Naive thymus-derived CD4-positive, alpha-beta T cell (primary cell): ENCODE measurements at regions of chr5 and their contacts with region 1.

Region 1: DNA sequence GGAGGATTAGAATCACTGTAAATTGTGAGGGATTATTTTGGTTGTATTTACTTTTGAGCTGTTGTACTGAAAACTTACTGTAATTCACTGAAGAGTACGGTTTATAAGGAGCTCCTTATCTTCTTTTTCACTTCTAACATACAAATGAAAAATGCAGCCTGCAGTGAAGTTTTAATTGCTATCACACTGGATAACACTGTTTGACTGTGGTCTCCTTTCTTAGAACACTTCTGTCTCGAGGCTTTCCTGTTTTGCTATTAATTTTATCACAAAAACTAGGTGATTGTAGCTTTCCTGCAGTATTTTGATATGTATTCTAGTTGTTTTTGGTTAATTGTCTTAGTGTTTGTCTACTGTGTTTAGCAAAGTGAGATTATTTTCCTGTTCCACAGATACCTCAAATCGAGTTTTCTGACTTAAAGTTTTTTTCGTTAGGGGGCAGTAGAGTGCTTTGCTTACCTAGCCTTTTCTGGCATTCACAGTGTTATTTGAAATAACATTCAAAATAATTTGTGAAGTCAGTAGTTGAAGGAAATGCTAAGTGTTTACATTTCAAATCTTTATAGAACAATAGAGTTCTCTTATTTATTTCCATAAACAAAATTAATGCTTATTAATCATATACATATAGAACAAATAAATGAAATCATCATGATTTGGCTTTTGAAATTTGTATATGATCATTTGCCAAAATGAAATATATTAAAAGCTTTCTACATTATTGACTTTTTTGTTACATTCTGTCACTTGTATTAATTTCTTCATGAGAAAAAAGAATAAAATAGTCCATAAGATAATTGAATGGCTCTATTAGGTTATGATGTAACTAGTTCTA is 52.9 kb downstream of the COMMD10 start:
- DNase-seq: peak in 7 of 9 donors; percentile 14 to 47 (median 38)
- ATAC-seq: peak; percentile 64
- H3K4me3 ChIP-seq: no peak overlapping the region
- H3K4me3 Mint-ChIP-seq: no peak overlapping the region
- H3K27ac ChIP-seq: no peak overlapping the region
- H3K27ac Mint-ChIP-seq: peak overlapping the region in 7 of 9 donors; percentile 28 to 78 (median 58)
- H3K4me1 ChIP-seq: no peaks in the 10 kb centered on the region
- H3K4me1 Mint-ChIP-seq: peaks cover 8 to 50% (median 30%) of the 10 kb centered on the region in 7 donors
- H3K27me3 ChIP-seq: no peaks in the 10 kb centered on the region
- H3K27me3 Mint-ChIP-seq: no peaks in the 10 kb centered on the region

Region 2: DNA sequence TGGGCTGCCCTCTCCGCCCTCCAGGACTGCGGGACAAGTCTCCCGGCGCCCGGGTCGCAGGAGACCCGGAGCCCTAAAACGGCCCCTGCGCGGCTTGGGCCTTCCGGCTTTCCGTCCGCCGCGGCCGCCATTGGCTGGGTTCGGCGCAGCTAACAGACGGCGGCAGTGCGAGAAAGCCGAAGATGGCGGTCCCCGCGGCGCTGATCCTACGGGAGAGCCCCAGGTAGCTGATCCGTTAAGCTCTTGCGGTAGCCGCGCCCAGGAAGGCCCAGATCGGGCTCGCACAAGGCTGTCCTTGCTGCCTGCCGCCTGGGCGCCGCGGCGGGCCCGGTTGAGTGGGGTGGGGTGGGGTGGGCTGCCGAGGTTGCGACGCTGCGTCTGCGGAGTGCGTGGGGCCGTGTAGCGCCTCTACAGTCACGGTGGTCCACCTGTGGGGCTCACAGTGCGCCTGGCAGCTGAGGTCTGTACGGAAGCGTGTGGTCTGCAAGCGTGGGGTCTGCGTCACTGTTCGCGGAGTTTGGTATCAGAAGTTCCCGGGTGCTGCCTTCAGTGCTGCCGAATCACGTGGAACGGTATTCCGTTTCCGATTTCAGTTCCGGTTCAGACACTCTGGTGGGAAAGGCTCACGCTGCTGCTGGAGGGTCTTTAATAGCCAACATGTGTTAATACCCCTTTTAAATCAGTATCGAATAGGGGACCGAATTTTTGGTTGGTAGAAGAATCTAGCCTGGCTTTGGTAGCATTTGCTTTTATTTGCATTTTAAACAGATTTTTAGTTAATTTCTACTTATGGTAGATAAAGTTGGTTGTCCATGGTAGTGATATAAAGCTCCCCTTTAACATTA is 52.7 kb before region 1 on chr5 and contains the start of gene COMMD10:
- CTCF ChIA-PET with region 1: no interaction called
- POLR2A ChIA-PET with region 1: no interaction called
- intact Hi-C with region 1: loop called in 1 of 2 experiments (anchors 1 kb)
- DNase-seq: peak; percentile 65 to 88 (median 83)
- ATAC-seq: peak; percentile 95
- H3K4me3 ChIP-seq: peak within 1 kb of the TSS; percentile 54
- H3K4me3 Mint-ChIP-seq: peak within 1 kb of the TSS; percentile 87 to 98 (median 95)
- H3K27ac ChIP-seq: peak within 1 kb of the TSS; percentile 94
- H3K27ac Mint-ChIP-seq: peak within 1 kb of the TSS; percentile 90 to 99 (median 98)
- H3K4me1 ChIP-seq: peaks cover 13 to 16% of the 10 kb centered on the region in 2 donors
- H3K4me1 Mint-ChIP-seq: peaks cover 22 to 77% (median 66%) of the 10 kb centered on the region in 7 donors
- H3K27me3 ChIP-seq: no peaks in the 10 kb centered on the region
- H3K27me3 Mint-ChIP-seq: peaks cover 0 to 3% (median 0%) of the 10 kb centered on the region in 5 donors
- total RNA-seq, gene COMMD10: 29.4 to 50.6 (median 37.8) TPM

Region 3: DNA sequence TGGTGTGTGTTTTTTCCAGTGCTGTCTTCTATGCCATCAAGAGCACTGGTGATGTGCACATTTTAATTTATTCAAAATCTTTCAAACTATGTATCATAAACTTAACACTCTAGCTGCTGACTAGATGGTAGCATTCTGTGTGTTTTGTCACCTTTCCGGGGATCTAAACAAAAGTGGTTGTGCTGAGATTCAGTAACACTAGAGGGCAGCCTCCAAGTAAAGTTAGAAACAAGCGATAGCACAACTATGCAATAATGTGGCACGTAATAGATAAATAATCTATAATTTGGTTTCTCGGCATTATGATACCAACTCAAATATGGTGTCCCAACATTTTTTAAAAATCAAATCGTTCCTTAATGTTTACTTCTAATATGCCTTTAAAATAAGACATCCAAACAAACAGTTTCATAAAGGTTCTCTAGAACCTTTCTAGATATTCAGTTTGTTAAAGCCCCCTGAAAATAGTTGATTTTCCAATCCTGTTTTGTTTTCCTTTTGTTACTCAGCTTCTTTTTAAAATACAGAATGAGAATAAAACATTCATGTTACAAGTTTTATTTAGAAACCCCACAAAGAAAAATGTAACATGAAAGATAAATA is 420.0 kb after region 1 on chr5:
- CTCF ChIA-PET with region 1: no interaction called
- POLR2A ChIA-PET with region 1: no interaction called
- intact Hi-C with region 1: loop called in 1 of 2 experiments (anchors 5 kb)
- DNase-seq: no peak
- ATAC-seq: no peak
- H3K4me3 ChIP-seq: no peak overlapping the region
- H3K4me3 Mint-ChIP-seq: no peak overlapping the region
- H3K27ac ChIP-seq: no peak overlapping the region
- H3K27ac Mint-ChIP-seq: no peak overlapping the region
- H3K4me1 ChIP-seq: no peaks in the 10 kb centered on the region
- H3K4me1 Mint-ChIP-seq: peaks cover 0 to 5% (median 0%) of the 10 kb centered on the region in 7 donors
- H3K27me3 ChIP-seq: no peaks in the 10 kb centered on the region
- H3K27me3 Mint-ChIP-seq: peaks cover 0 to 9% (median 0%) of the 10 kb centered on the region in 5 donors

Region 4: GRCh38 chr5:116759860-116760640 is 622.3 kb after region 1 on chr5:
- CTCF ChIA-PET with region 1: no interaction called
- POLR2A ChIA-PET with region 1: no interaction called
- intact Hi-C with region 1: loop called in 1 of 2 experiments (anchors 5 kb)
- DNase-seq: no peak
- ATAC-seq: no peak
- H3K4me3 ChIP-seq: no peak overlapping the region
- H3K4me3 Mint-ChIP-seq: no peak overlapping the region
- H3K27ac ChIP-seq: no peak overlapping the region
- H3K27ac Mint-ChIP-seq: no peak overlapping the region
- H3K4me1 ChIP-seq: no peaks in the 10 kb centered on the region
- H3K4me1 Mint-ChIP-seq: no peaks in the 10 kb centered on the region
- H3K27me3 ChIP-seq: no peaks in the 10 kb centered on the region
- H3K27me3 Mint-ChIP-seq: peaks cover 0 to 9% (median 0%) of the 10 kb centered on the region in 5 donors

Region 5: GRCh38 chr5:116947691-116948528 is 810.1 kb after region 1 on chr5:
- CTCF ChIA-PET with region 1: interaction called, 3 read pairs
- POLR2A ChIA-PET with region 1: no interaction called
- intact Hi-C with region 1: loop called in 1 of 2 experiments (anchors 1 kb)
- DNase-seq: peak in 7 of 9 donors; percentile 18 to 58 (median 27)
- ATAC-seq: peak; percentile 74
- H3K4me3 ChIP-seq: no peak overlapping the region
- H3K4me3 Mint-ChIP-seq: no peak overlapping the region
- H3K27ac ChIP-seq: no peak overlapping the region
- H3K27ac Mint-ChIP-seq: no peak overlapping the region
- H3K4me1 ChIP-seq: no peaks in the 10 kb centered on the region
- H3K4me1 Mint-ChIP-seq: peaks cover 0 to 1% (median 0%) of the 10 kb centered on the region in 7 donors
- H3K27me3 ChIP-seq: no peaks in the 10 kb centered on the region
- H3K27me3 Mint-ChIP-seq: peaks cover 0 to 5% (median 3%) of the 10 kb centered on the region in 5 donors